Naive thymus-derived CD8-positive, alpha-beta T cell (primary cell): ENCODE measurements at regions of chr19 and their contacts with region 1.

Region 1: DNA sequence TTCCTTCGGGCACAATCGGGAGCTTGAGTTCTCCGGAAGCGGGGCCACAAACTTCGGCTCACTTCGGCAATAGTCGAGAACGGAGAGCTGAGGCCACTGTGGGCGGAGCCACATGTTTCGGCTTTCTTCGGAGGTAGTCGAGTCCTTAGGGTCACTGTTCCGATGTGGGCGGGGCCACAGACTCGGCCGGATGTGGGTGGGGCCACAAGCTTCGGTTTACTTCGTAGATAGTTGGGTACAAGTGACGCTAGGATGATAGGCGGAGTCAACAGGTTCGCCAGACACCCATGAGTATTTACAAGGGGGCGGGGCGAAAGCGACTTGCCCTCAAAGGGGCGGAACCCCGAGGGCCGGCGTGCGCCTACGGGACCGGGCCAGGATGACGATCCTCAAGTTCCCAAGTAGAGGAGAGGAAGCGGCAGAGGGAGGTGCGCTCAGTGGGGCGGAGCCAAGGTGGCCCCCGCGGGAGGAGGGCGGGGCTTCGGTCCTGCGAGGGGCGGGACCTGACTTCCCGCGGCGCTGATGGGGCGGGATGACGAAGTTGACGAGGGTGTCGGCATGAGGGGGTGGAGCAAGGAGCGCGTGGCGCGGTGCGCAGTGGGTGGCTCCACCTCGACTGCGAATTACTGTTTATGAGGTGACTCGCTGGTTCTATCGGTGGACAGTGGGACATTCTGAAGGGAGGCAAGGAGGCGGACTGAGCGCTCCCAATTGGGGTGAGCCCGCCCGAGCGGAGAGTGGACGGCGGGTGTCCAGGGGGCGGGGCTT is 539 bp upstream of the MBOAT7 start:
- DNase-seq: peak; percentile 99 to 100 (median 100)
- ATAC-seq: peak; percentile 54 to 63
- H3K4me3 Mint-ChIP-seq: peak overlapping the region; percentile 86 to 100 (median 95)
- H3K27ac Mint-ChIP-seq: peak overlapping the region; percentile 98 to 100 (median 99)
- H3K4me1 Mint-ChIP-seq: peaks cover 22 to 53% (median 44%) of the 10 kb centered on the region in 4 donors
- H3K27me3 Mint-ChIP-seq: no peaks in the 10 kb centered on the region

Region 2: GRCh38 chr19:53867225-53868090 is 322.5 kb before region 1 on chr19 and contains the start of gene MYADM:
- POLR2A ChIA-PET with region 1: interaction called, 10 read pairs
- DNase-seq: peak; percentile 98 to 100 (median 100)
- ATAC-seq: peak; percentile 45 to 72
- H3K4me3 Mint-ChIP-seq: peak within 1 kb of the TSS; percentile 90 to 99 (median 96)
- H3K27ac Mint-ChIP-seq: peak within 1 kb of the TSS; percentile 94 to 100 (median 100)
- H3K4me1 Mint-ChIP-seq: peaks cover 21 to 56% (median 43%) of the 10 kb centered on the region in 4 donors
- H3K27me3 Mint-ChIP-seq: peaks cover 0 to 1% (median 0%) of the 10 kb centered on the region in 5 donors
- polyA plus RNA-seq, gene MYADM: 33.9 to 42.0 (median 40.3) TPM

Region 3: DNA sequence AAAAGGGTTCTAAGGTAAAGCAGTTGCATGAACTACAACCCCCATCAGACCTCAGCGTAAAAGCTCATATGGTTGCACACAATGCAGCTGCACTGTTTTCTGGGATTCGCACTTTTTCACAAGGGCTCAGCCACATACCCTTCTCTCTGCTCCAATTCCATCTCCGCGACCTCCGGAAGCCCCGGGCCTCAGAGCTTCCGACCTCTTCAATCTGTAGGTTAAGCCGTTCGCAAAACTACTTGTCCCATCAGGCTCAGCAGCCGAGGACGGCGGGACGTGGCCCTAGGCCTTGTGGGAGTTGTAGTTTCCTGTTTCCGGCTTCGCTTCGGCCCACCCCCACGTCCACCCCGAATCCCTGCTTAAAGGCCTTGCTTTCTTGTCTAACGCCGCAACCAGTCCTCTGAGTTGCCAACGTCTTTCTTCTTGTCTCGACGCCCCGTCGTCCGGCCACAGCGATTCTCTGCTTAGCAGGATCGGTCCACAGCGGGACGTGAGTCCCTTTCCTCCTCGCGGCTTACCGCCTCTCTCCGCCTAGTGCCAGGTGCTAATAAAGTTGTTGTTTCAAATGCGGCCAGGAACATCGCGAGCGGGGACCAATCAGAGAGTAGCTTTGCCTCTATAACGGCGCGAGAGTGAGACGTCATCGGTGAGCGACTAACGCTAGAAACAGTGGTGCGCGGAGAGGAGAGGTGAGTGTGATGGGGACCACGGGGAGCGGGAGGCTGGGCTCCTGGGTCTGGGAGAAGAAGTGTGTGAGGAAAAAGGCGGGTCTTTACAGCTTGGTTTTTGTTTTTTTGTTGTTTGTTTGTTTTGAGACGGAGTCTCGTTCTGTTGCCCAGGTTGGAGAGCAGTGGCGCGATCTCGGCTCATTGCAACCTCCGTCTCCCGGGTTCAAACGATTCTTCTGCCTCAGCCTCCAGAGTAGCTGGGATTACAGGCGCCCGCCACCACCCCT is 74.5 kb before region 1 on chr19 and contains the starts of genes PRPF31 and TFPT:
- POLR2A ChIA-PET with region 1: interaction called, 17 read pairs
- DNase-seq: peak; percentile 79 to 100 (median 96)
- ATAC-seq: peak; percentile 87 to 89
- H3K4me3 Mint-ChIP-seq: peak within 1 kb of the TSS; percentile 87 to 98 (median 93)
- H3K27ac Mint-ChIP-seq: peak within 1 kb of the TSS; percentile 89 to 99 (median 95)
- H3K4me1 Mint-ChIP-seq: peaks cover 16 to 50% (median 36%) of the 10 kb centered on the region in 4 donors
- H3K27me3 Mint-ChIP-seq: peaks cover 0 to 4% (median 0%) of the 10 kb centered on the region in 5 donors
- polyA plus RNA-seq, gene PRPF31: 64.0 to 82.4 (median 80.8) TPM
- polyA plus RNA-seq, gene TFPT: 17.4 to 24.4 (median 23.0) TPM

Region 4: DNA sequence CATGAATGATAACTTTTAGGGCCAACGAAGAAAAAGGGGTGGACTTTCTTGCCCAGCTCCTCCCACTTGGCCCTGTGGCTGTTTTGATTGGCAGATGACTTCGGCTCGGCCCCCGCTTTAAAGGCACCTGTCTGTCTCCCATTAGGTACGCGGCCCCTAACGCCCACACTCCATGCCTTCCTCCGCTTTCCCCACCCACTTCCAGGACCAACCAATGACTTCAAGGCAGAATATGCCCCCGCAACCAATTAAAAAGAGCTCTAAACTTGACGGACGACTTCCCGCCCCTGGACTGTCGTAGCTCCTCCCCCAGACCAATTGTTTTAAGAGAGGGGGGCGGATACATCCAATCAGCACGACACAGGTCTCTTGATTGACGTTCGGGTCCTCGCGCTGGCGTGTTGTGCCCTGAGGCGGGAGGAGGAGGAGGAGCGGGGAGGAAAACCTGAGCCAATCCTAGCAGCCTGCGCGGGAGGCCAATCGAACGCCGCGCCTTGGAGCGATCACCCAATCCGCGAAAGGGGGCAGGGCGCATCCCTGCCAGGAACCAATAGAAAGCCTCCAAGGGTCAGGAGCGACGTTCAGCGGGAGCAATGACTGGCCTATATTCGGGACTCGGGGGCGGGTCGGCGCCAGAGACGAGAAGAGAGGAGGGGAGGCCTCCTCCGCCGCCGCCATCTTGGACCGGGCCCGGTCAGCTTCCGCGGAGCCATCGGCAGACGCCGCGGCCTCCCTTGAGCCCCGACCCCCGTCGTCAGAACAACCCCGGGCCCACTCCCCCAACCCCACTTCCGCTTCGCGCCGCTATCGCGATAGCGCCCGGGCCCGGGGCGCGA is 52.6 kb before region 1 on chr19 and contains the start of gene CNOT3:
- POLR2A ChIA-PET with region 1: interaction called, 56 read pairs
- DNase-seq: peak; percentile 95 to 100 (median 100)
- ATAC-seq: peak; percentile 80
- H3K4me3 Mint-ChIP-seq: peak within 1 kb of the TSS; percentile 78 to 94 (median 91)
- H3K27ac Mint-ChIP-seq: peak within 1 kb of the TSS; percentile 87 to 98 (median 92)
- H3K4me1 Mint-ChIP-seq: peaks cover 29 to 54% (median 52%) of the 10 kb centered on the region in 4 donors
- H3K27me3 Mint-ChIP-seq: no peaks in the 10 kb centered on the region
- polyA plus RNA-seq, gene CNOT3: 6.6 to 14.5 (median 7.9) TPM

Region 5: DNA sequence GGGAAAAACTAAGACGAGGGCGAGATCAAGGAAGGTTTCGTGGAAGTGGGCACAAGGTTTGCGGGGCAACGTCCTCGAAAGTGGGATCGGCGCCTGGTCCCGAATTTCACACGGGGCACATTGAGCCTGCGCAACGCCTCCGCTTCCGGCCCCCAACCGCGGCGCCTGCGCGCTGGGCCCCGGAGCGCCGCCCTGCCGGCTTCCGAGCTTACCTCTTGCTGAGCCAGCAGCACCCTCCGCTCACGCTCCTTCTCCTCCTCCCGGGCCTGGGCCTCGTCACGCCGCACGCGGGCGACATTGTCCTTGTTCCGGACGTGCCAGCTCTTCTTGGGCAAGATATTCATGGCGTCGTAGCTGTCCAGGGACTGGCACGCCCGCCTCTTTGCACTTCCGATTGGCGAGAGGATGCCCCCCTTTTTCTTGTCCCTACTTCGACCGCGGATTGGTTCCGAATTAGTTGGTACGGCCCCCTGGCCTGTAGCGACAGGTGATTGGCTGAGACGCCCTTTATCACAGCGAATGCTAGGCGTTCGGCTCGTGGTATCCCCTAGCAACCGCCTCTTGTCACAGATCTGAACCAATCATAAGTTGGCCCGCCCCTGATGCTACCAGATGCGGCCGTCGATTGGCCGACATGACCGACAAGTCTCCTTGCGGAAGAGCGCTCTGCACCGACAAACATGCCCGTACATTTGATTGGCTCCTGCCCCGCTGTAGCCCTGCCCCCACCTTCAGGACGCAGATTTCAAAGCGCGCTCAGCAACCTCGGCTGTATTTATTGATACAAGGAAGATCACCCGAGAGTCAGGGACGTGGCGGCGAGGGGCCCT is 30.4 kb before region 1 on chr19 and contains the start of gene LENG1:
- POLR2A ChIA-PET with region 1: interaction called, 103 read pairs
- DNase-seq: peak; percentile 89 to 100 (median 99)
- ATAC-seq: peak; percentile 86 to 89
- H3K4me3 Mint-ChIP-seq: peak within 1 kb of the TSS; percentile 91 to 100 (median 100)
- H3K27ac Mint-ChIP-seq: peak within 1 kb of the TSS; percentile 99 to 100 (median 99)
- H3K4me1 Mint-ChIP-seq: peaks cover 32 to 77% (median 73%) of the 10 kb centered on the region in 4 donors
- H3K27me3 Mint-ChIP-seq: peaks cover 0 to 2% (median 0%) of the 10 kb centered on the region in 5 donors
- polyA plus RNA-seq, gene LENG1: 7.7 to 13.9 (median 9.3) TPM

Region 6: DNA sequence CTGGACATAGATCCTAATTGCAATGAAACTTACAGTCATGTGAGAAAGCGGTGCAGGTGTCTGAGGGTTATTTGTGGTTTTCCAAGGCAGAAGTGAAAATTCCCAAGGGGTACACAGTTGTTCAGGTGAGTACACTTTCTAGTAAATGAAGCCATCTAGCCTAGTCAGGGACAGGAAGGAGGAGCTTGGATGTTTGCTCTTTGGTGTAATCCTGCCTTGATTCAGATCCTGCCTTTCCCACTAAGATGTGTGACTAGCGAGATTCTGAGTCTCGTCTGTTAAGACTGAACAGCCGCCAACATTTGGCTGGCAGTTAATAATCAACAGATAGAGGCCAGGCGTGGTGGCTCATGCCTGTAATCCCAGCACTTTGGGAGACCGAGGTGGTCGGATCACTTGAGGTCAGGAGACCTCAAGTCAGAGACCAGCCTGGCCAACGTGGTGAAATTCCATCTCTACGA is 13.3 kb after region 1 on chr19:
- POLR2A ChIA-PET with region 1: interaction called, 158 read pairs
- DNase-seq: no peak
- ATAC-seq: no peak
- H3K4me3 Mint-ChIP-seq: peak overlapping the region; percentile 9 to 100 (median 93)
- H3K27ac Mint-ChIP-seq: peak overlapping the region in 5 of 10 donors; percentile 31 to 68 (median 46)
- H3K4me1 Mint-ChIP-seq: peaks cover 18 to 83% (median 65%) of the 10 kb centered on the region in 4 donors
- H3K27me3 Mint-ChIP-seq: no peaks in the 10 kb centered on the region

Region 7: DNA sequence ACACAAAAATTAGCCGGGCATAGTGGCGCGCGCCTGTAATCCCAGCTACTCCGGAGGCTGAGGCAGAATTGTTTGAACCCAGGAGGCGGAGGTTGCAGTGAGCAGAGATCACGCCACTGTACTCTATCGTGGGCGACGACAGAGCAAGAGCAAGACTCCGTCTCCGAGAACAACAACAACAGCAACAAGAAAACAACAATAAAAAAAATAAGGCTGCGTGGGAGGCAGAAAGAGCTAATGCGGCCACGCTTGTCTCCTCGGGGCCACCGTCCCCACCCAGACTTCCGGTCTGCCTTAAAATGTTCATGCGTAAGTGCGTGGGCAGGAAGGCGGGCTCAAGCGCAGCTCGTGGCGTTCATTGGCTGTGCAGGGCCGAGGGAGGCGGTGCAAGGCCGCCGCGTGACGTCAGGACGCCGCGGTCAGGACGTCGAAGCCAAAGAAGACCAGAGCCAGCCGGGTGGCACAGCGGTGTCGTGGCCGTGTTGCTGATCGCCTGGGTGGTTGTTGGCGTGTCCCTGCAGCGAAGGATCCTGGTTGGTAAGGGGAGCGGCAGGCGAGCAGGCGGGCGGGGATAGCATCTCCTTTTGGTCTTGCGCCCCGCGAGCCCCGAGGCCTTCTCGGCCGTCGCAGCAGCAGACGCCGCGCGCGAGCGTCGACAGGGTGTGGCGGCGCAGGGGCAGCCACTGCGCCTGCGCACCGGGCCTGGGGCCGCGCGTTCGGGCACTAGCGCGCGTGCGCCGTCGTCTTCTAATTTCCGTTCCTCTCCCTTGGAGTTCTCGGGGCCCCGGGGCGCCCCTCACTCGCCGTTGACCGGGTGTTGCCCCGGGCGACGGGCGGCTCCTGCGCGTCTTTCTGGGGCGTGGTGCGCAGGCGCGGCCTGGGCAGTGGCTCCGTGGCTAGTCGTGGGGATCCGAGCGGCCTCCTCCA is 259.1 kb after region 1 on chr19 and contains the start of gene LENG8:
- POLR2A ChIA-PET with region 1: interaction called, 10 read pairs
- DNase-seq: peak; percentile 95 to 99 (median 98)
- ATAC-seq: peak; percentile 88 to 92
- H3K4me3 Mint-ChIP-seq: peak within 1 kb of the TSS; percentile 92 to 100 (median 98)
- H3K27ac Mint-ChIP-seq: peak within 1 kb of the TSS; percentile 99 to 100 (median 100)
- H3K4me1 Mint-ChIP-seq: peaks cover 28 to 68% (median 57%) of the 10 kb centered on the region in 4 donors
- H3K27me3 Mint-ChIP-seq: peaks cover 0 to 3% (median 0%) of the 10 kb centered on the region in 5 donors
- polyA plus RNA-seq, gene LENG8: 4.5 to 8.6 (median 6.5) TPM